ENCODE measurements at regions of chr3 and their contacts with region 1.

Region 1: GRCh38 chr3:188788621-188789081 is 383.1 kb upstream of the TPRG1 start:
- DNase-seq: peak in 8 of 9 donors; percentile 33 to 77 (median 64)
- ATAC-seq: peak; percentile 94
- H3K4me3 ChIP-seq: no peak overlapping the region
- H3K4me3 Mint-ChIP-seq: no peak overlapping the region
- H3K27ac ChIP-seq: no peak overlapping the region
- H3K27ac Mint-ChIP-seq: no peak overlapping the region
- H3K4me1 ChIP-seq: peaks cover 9 to 14% of the 10 kb centered on the region in 2 donors
- H3K4me1 Mint-ChIP-seq: peaks cover 0 to 10% (median 0%) of the 10 kb centered on the region in 7 donors
- H3K27me3 ChIP-seq: no peaks in the 10 kb centered on the region
- H3K27me3 Mint-ChIP-seq: no peaks in the 10 kb centered on the region

Region 2: DNA sequence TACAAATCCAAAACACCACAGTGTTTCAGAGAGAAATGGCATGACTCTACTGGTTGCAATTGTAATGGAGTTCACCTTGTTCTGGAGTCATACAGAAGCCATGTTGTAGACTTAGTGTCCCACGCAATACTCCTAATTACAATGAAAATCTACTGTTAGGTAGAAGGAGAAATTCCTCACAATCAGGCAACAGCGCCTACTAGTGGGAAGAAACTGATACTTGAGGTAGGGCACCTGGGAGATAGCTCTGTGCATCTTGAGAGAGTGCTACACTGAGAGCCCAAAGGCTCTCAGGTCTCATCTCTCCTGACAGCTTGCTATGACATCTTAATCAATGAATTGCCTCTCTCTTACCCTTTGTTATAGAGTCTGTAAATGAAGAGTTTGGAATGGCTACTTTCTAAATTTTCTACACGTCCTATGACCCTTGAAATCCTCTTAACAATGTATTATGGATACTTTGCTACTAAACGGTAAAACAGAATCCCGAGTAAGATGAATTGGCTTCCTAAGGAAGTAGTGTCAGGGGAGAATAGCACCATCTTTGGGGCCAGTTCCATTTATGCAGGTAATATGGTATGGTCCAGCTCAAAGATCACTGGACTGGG is 39.5 kb before region 1 on chr3:
- CTCF ChIA-PET with region 1: no interaction called
- POLR2A ChIA-PET with region 1: no interaction called
- intact Hi-C with region 1: loop called (anchors 1 to 5 kb)
- DNase-seq: peak in 8 of 9 donors; percentile 25 to 62 (median 46)
- ATAC-seq: peak; percentile 82
- H3K4me3 ChIP-seq: no peak overlapping the region
- H3K4me3 Mint-ChIP-seq: no peak overlapping the region
- H3K27ac ChIP-seq: no peak overlapping the region
- H3K27ac Mint-ChIP-seq: no peak overlapping the region
- H3K4me1 ChIP-seq: no peaks in the 10 kb centered on the region
- H3K4me1 Mint-ChIP-seq: peaks cover 0 to 17% (median 0%) of the 10 kb centered on the region in 7 donors
- H3K27me3 ChIP-seq: no peaks in the 10 kb centered on the region
- H3K27me3 Mint-ChIP-seq: no peaks in the 10 kb centered on the region

Region 3: DNA sequence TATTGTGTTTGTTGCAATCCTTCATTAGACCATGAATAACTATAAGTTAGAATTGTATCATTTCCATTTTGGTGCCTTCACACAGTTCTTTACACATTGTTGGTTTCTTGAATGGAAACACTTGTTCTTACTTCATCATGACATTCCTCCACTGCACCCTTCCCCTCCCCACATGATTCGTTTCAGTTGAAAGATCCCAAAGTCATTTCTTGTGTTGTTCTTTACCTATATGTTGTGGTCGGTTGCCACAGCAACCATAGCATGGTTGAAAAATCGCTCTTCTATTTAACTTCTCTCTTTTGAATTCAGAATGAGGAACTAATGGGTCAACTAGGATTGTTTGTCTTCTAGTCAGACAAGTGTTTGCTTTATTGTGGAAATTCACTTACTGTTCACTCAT is 1828.5 kb after region 1 on chr3:
- CTCF ChIA-PET with region 1: no interaction called
- POLR2A ChIA-PET with region 1: no interaction called
- intact Hi-C with region 1: no loop called
- DNase-seq: peak in 1 of 9 donors; percentile 43
- ATAC-seq: peak; percentile 86
- H3K4me3 ChIP-seq: no peak overlapping the region
- H3K4me3 Mint-ChIP-seq: peak overlapping the region in 1 of 10 donors; percentile 78
- H3K27ac ChIP-seq: no peak overlapping the region
- H3K27ac Mint-ChIP-seq: peak overlapping the region in 1 of 9 donors; percentile 94
- H3K4me1 ChIP-seq: peaks cover 0 to 4% of the 10 kb centered on the region in 2 donors
- H3K4me1 Mint-ChIP-seq: peaks cover 26 to 81% (median 31%) of the 10 kb centered on the region in 7 donors
- H3K27me3 ChIP-seq: no peaks in the 10 kb centered on the region
- H3K27me3 Mint-ChIP-seq: no peaks in the 10 kb centered on the region

Measured in naive thymus-derived CD4-positive, alpha-beta T cell (primary cell).